ENCODE measurements at regions of chr1 and their contacts with region 1.

Region 1: DNA sequence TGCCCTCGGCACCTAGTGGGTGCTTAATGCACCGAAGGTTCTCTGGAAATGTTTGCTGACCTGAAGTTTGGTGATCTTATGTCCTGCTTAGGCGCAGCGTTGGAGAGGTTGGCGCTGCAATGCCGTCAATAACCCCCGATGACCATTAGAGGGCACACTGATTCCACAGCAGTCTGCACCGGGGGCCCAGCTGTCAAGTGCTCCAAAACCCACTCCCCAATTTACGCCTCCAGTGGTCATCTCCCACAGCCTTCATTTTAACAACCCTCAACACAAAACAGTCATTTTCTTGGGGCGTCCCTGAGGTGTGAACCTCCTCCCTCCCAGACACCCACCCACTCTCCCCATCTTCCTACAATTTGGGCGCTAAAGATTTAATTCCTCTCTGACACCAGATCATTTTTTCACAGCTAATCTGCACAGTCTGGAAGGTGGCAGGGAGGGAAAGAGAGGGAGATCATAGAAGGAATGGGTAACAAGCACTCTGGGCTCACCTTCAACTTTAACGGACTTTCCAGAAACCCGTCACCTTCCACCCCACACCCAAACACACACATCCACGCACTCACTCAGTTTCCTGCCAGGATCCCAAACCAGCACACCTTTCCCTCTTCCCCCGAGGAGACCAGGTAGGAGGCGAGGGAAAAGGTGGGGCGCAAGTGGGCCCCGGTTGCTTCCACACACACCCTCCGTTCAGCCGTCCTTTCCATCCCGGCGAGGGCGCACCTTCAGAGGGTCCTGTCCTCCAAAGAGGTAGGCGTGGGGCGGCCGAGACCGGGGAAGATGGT is 576 bp upstream of the NPR1 start:
- DNase-seq: peak; percentile 68 to 69
- ATAC-seq: peak; percentile 65 to 79; a peak in 5 of 6 replicates
- H3K4me3 ChIP-seq: peak overlapping the region; percentile 48
- H3K27ac ChIP-seq: peak overlapping the region in 1 of 2 experiments; percentile 81; a peak in 5 of 6 replicates
- H3K4me1 ChIP-seq: peaks cover 11% of the 10 kb centered on the region; the same call in 2 of the 3 replicates
- CTCF ChIP-seq: peak; percentile 94
- EP300 ChIP-seq: no peak
- POLR2A ChIP-seq: no peak
- RAD21 ChIP-seq: peak; percentile 95

Region 2: DNA sequence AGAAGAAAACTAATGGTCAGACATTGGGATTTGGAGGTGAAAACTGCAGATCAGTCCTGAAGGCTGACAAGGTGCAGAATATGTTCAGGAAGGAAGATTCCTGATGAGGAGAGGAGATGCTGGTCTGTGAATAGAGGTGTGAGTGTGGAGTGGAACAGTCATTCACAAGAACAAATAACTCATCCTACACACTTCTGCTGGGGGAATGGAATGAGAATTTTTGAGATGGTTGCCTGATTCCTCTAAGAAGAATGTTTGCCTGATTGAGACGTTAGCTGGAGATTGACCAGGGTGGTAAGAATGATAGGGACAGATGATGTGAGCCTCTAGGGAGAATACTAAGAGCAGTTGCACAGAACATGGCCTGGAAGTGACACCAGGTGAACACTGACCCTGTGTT is 221.5 kb before region 1 on chr1:
- CTCF ChIA-PET with region 1: no interaction called
- POLR2A ChIA-PET with region 1: no interaction called
- DNase-seq: no peak
- ATAC-seq: no peak
- H3K4me3 ChIP-seq: no peak overlapping the region
- H3K27ac ChIP-seq: no peak overlapping the region
- H3K4me1 ChIP-seq: no peaks in the 10 kb centered on the region
- CTCF ChIP-seq: no peak
- EP300 ChIP-seq: no peak
- POLR2A ChIP-seq: no peak
- RAD21 ChIP-seq: no peak

Region 3: GRCh38 chr1:153626922-153627796 is 50.8 kb before region 1 on chr1 and contains the start of gene S100A13:
- CTCF ChIA-PET with region 1: no interaction called
- POLR2A ChIA-PET with region 1: no interaction called
- DNase-seq: peak; percentile 85 to 91
- ATAC-seq: peak; percentile 80 to 87
- H3K4me3 ChIP-seq: peak within 1 kb of the TSS; percentile 57
- H3K27ac ChIP-seq: peak within 1 kb of the TSS; percentile 92
- H3K4me1 ChIP-seq: peaks cover 18% of the 10 kb centered on the region
- CTCF ChIP-seq: peak; percentile 73
- EP300 ChIP-seq: no peak
- POLR2A ChIP-seq: peak; percentile 75
- RAD21 ChIP-seq: peak; percentile 54 to 72
- polyA plus RNA-seq, gene S100A13: 98.9 and 113 TPM in 2 replicates

Region 4: DNA sequence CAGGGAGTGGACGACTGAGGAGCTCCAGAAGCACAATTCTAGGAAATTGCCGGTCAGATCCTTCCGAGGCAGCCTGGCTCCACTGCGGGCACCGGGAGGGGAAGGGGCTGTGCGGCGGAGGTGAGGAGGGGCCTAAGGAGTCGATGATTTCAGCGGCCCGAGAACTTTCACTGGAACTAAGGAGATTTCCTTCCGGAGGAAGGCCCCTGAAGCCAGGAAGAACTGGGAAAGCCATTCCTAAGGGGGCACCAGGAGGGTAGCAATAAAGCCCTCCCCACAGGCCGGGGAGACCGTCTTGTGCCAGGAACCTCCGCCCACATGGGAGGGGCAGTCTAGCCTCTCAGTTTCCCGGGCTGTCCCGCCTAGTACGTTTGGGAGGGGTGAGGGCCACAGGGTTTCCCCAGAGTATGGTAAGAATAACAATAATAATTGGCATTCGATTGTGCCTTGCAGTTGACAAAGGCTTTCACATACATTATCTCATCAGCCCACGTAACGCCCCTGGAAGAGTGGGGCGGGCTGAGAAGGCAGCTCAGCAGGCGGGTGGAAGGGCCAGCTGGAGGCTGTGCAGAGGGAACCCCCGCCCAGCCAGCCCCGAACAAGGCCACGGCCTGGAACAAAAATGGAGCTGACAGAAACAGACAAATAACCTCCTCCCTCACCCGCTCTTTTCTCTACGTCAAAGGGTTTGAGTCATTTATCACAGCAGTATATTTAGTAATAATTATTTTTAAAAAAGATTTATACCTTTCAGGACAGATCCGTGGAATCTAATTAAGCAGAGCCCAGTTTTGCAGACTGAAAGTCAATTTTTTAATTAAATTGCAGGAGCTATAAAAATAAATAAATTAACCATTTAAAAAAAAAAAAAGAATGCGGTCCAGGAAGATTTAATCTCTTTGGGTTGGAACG is 20.4 kb after region 1 on chr1:
- CTCF ChIA-PET with region 1: interaction called, 34 read pairs
- POLR2A ChIA-PET with region 1: interaction called, 3 read pairs
- DNase-seq: no peak
- ATAC-seq: no peak
- H3K4me3 ChIP-seq: no peak overlapping the region
- H3K27ac ChIP-seq: peak overlapping the region; percentile 56 to 83
- H3K4me1 ChIP-seq: peaks cover 31% of the 10 kb centered on the region
- CTCF ChIP-seq: no peak
- EP300 ChIP-seq: no peak
- POLR2A ChIP-seq: no peak
- RAD21 ChIP-seq: no peak

Region 5: GRCh38 chr1:153742411-153743142 is 64.7 kb after region 1 on chr1:
- CTCF ChIA-PET with region 1: interaction called, 130 read pairs
- POLR2A ChIA-PET with region 1: no interaction called
- DNase-seq: peak in 1 of 2 experiments; percentile 39
- ATAC-seq: peak; percentile 19 to 54; a peak in 3 of 6 replicates
- H3K4me3 ChIP-seq: no peak overlapping the region
- H3K27ac ChIP-seq: peak overlapping the region in 1 of 2 experiments; percentile 74; a peak in 3 of 6 replicates
- H3K4me1 ChIP-seq: peaks cover 23% of the 10 kb centered on the region
- CTCF ChIP-seq: no peak
- EP300 ChIP-seq: no peak
- POLR2A ChIP-seq: no peak
- RAD21 ChIP-seq: no peak

Region 6: GRCh38 chr1:153763365-153764225 is 85.7 kb after region 1 on chr1:
- CTCF ChIA-PET with region 1: interaction called, 92 read pairs
- POLR2A ChIA-PET with region 1: no interaction called
- DNase-seq: no peak
- ATAC-seq: no peak
- H3K4me3 ChIP-seq: no peak overlapping the region
- H3K27ac ChIP-seq: no peak overlapping the region
- H3K4me1 ChIP-seq: no peaks in the 10 kb centered on the region
- CTCF ChIP-seq: no peak
- EP300 ChIP-seq: no peak
- POLR2A ChIP-seq: no peak
- RAD21 ChIP-seq: no peak